Posterior vena cava (tissue), 2 donors: ENCODE measurements at regions of chr2 and their contacts with region 1.

Region 1: GRCh38 chr2:68700560-68700959 is 34.1 kb upstream of the ARHGAP25 start:
- DNase-seq: no peak

Region 2: GRCh38 chr2:69612200-69612599 is 911.6 kb after region 1 on chr2:
- intact Hi-C with region 1: loop called in 1 of 2 experiments (anchors 5 kb)
- DNase-seq: no peak